ENCODE measurements at regions of chr1 and their contacts with region 1.

Region 1: DNA sequence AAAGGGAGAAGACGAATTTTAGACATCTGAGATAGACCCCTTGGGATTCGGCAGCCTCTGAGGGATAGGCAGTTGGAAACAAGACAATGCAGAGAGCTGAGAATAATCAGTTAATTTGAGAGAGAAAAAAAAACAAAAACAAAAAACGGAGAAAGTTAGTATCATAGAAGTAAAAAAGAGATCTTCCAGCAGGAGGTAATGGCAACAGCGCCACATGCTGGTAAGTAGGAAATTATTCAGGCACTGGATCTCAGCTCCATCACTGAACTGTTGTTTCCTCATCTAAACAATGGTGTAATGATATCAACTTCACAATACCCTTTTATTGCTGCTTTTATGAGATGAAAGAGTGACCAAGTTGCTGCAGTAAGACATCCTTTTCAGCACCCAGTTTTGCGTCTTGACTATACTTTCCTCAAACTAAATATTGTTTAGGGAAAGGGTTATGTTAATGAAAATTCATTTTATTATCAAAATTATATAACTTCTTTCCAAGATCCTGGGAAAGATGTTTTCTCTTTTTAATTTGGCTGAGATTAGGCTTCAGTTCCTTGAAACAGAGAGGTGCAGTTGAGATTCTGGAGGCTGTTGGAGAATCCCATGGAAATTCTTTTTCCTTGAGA is 91.4 kb upstream of the KCNA3 start:
- DNase-seq: peak; percentile 77
- ATAC-seq: peak; percentile 73
- H3K4me3 ChIP-seq: no peak overlapping the region
- H3K4me3 Mint-ChIP-seq: no peak overlapping the region
- H3K27ac ChIP-seq: no peak overlapping the region
- H3K27ac Mint-ChIP-seq: no peak overlapping the region
- H3K4me1 ChIP-seq: peaks cover 0 to 3% of the 10 kb centered on the region in 2 donors
- H3K4me1 Mint-ChIP-seq: peaks cover 2% of the 10 kb centered on the region
- H3K27me3 ChIP-seq: peaks cover 0 to 8% (median 3%) of the 10 kb centered on the region in 4 experiments
- H3K27me3 Mint-ChIP-seq: peaks cover 17% of the 10 kb centered on the region
- CTCF ChIP-seq: peak; percentile 92

Region 2: GRCh38 chr1:110554871-110555801 is 211.0 kb before region 1 on chr1:
- CTCF ChIA-PET with region 1: interaction called, 48 read pairs
- POLR2A ChIA-PET with region 1: no interaction called
- intact Hi-C with region 1: loop called (anchors 1 kb)
- DNase-seq: peak; percentile 74
- ATAC-seq: peak; percentile 93
- H3K4me3 ChIP-seq: peak overlapping the region in 2 of 5 experiments; percentile 20 to 27
- H3K4me3 Mint-ChIP-seq: peak overlapping the region; percentile 50
- H3K27ac ChIP-seq: no peak overlapping the region
- H3K27ac Mint-ChIP-seq: no peak overlapping the region
- H3K4me1 ChIP-seq: peaks cover 9 to 12% of the 10 kb centered on the region in 2 donors
- H3K4me1 Mint-ChIP-seq: peaks cover 4% of the 10 kb centered on the region
- H3K27me3 ChIP-seq: peaks cover 0 to 57% (median 24%) of the 10 kb centered on the region in 4 experiments
- H3K27me3 Mint-ChIP-seq: peaks cover 78% of the 10 kb centered on the region
- CTCF ChIP-seq: peak; percentile 83

Region 3: DNA sequence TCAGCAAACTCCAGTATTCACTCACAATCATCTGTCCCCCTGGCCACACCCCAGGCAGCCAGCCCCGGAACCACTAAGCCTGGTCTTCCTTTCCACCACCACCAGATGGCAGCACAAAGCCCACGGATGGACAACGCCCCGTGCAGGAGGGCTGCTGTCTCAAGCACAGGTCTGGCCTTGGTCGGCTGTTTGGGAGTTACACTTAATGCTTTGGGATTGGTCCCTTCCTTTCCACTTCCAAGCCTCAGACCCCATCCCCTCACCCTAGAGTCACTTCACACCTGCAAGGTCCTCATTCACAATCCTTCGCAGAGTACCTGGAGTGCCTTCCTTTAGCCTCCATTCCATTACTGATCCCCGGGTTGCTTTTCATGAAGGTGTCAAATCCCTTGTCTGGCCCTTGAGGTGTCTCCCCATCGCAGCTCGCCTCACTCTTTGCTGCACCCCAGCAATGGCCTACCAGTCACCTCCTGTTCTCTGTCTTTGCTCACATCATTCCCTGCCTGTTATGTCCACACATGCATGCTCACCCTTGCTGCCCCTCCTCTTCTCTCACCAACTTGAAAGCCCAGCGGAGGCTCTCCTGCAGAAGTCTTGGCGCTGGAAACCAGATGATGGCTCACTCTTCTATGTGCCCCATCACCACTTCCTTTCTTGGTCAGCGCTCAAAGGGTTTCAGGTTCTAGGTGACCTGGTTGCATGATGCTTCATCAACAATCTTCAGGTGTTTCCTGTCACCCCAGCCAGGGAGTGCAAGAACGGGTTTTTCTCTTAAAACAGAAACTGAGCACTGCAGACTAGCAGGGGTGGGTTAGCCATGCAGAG is 135.1 kb before region 1 on chr1:
- CTCF ChIA-PET with region 1: interaction called, 155 read pairs
- POLR2A ChIA-PET with region 1: no interaction called
- intact Hi-C with region 1: loop called (anchors 1 kb)
- DNase-seq: peak; percentile 86
- ATAC-seq: peak; percentile 76
- H3K4me3 ChIP-seq: peak overlapping the region in 2 of 5 experiments; percentile 13 to 28
- H3K4me3 Mint-ChIP-seq: no peak overlapping the region
- H3K27ac ChIP-seq: peak overlapping the region in 1 of 2 donors; percentile 65
- H3K27ac Mint-ChIP-seq: no peak overlapping the region
- H3K4me1 ChIP-seq: peaks cover 56 to 65% of the 10 kb centered on the region in 2 donors
- H3K4me1 Mint-ChIP-seq: peaks cover 43% of the 10 kb centered on the region
- H3K27me3 ChIP-seq: no peaks in the 10 kb centered on the region
- H3K27me3 Mint-ChIP-seq: no peaks in the 10 kb centered on the region
- CTCF ChIP-seq: peak; percentile 88

Region 4: GRCh38 chr1:110749960-110750359 is 16.2 kb before region 1 on chr1:
- CTCF ChIA-PET with region 1: interaction called, 19 read pairs
- POLR2A ChIA-PET with region 1: no interaction called
- intact Hi-C with region 1: no loop called
- DNase-seq: no peak
- ATAC-seq: no peak
- H3K4me3 ChIP-seq: no peak overlapping the region
- H3K4me3 Mint-ChIP-seq: no peak overlapping the region
- H3K27ac ChIP-seq: no peak overlapping the region
- H3K27ac Mint-ChIP-seq: no peak overlapping the region
- H3K4me1 ChIP-seq: no peaks in the 10 kb centered on the region
- H3K4me1 Mint-ChIP-seq: no peaks in the 10 kb centered on the region
- H3K27me3 ChIP-seq: peaks cover 0 to 28% (median 21%) of the 10 kb centered on the region in 4 experiments
- H3K27me3 Mint-ChIP-seq: peaks cover 31% of the 10 kb centered on the region
- CTCF ChIP-seq: no peak

Region 5: GRCh38 chr1:110986407-110986891 is 220.3 kb after region 1 on chr1:
- CTCF ChIA-PET with region 1: interaction called, 20 read pairs
- POLR2A ChIA-PET with region 1: no interaction called
- intact Hi-C with region 1: no loop called
- DNase-seq: no peak
- ATAC-seq: no peak
- H3K4me3 ChIP-seq: no peak overlapping the region
- H3K4me3 Mint-ChIP-seq: no peak overlapping the region
- H3K27ac ChIP-seq: no peak overlapping the region
- H3K27ac Mint-ChIP-seq: no peak overlapping the region
- H3K4me1 ChIP-seq: peaks cover 0 to 8% of the 10 kb centered on the region in 2 donors
- H3K4me1 Mint-ChIP-seq: peaks cover 7% of the 10 kb centered on the region
- H3K27me3 ChIP-seq: peaks cover 0 to 10% (median 4%) of the 10 kb centered on the region in 4 experiments
- H3K27me3 Mint-ChIP-seq: peaks cover 25% of the 10 kb centered on the region
- CTCF ChIP-seq: no peak

Measured in B cell (primary cell).